T-cell (primary cell): ENCODE measurements at regions of chr14 and their contacts with region 1.

Region 1: DNA sequence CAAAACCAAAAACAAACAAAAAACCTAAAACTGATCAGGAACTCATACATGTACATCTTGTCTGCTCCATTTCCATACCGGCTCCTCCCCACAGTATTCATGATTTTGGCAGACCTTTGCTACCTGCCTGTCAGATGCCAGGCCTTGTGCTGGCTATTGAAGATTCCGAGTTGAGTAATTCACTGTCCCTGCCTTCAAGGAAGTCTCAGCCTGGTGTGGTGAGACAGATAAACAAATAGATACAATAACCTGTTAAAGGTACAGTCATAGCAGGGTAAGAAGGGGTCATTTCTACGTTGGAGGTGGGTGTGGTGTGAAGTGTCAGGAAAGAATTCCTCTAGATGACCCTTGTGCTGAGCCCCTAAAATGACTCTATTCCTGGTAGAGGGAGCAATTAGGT is 42.8 kb downstream of the SUSD6 start:
- DNase-seq: no peak
- ATAC-seq: no peak
- H3K4me3 ChIP-seq: no peak overlapping the region
- H3K4me3 Mint-ChIP-seq: no peak overlapping the region
- H3K27ac ChIP-seq: no peak overlapping the region
- H3K27ac Mint-ChIP-seq: peak overlapping the region; percentile 63 to 70
- H3K4me1 ChIP-seq: peaks cover 15 to 44% of the 10 kb centered on the region in 2 experiments
- H3K4me1 Mint-ChIP-seq: peaks cover 85 to 93% (median 89%) of the 10 kb centered on the region in 3 donors
- H3K27me3 ChIP-seq: no peaks in the 10 kb centered on the region
- H3K27me3 Mint-ChIP-seq: no peaks in the 10 kb centered on the region

Region 2: GRCh38 chr14:69527635-69528034 is 126.5 kb before region 1 on chr14:
- CTCF ChIA-PET with region 1: no interaction called
- POLR2A ChIA-PET with region 1: no interaction called
- DNase-seq: no peak
- ATAC-seq: no peak
- H3K4me3 ChIP-seq: no peak overlapping the region
- H3K4me3 Mint-ChIP-seq: no peak overlapping the region
- H3K27ac ChIP-seq: no peak overlapping the region
- H3K27ac Mint-ChIP-seq: no peak overlapping the region
- H3K4me1 ChIP-seq: no peaks in the 10 kb centered on the region
- H3K4me1 Mint-ChIP-seq: no peaks in the 10 kb centered on the region
- H3K27me3 ChIP-seq: peaks cover 0 to 18% of the 10 kb centered on the region in 2 experiments
- H3K27me3 Mint-ChIP-seq: peaks cover 3 to 11% of the 10 kb centered on the region in 2 donors

Region 3: GRCh38 chr14:69643443-69644164 is 10.5 kb before region 1 on chr14:
- CTCF ChIA-PET with region 1: no interaction called
- POLR2A ChIA-PET with region 1: no interaction called
- DNase-seq: peak in 10 of 35 experiments; percentile 10 to 58 (median 27)
- ATAC-seq: peak; percentile 59 to 99 (median 96)
- H3K4me3 ChIP-seq: no peak overlapping the region
- H3K4me3 Mint-ChIP-seq: peak overlapping the region in 1 of 3 donors; percentile 7
- H3K27ac ChIP-seq: no peak overlapping the region
- H3K27ac Mint-ChIP-seq: peak overlapping the region; percentile 60 to 76
- H3K4me1 ChIP-seq: peaks cover 8 to 34% of the 10 kb centered on the region in 2 experiments
- H3K4me1 Mint-ChIP-seq: peaks cover 75 to 94% (median 87%) of the 10 kb centered on the region in 3 donors
- H3K27me3 ChIP-seq: no peaks in the 10 kb centered on the region
- H3K27me3 Mint-ChIP-seq: no peaks in the 10 kb centered on the region

Region 4: GRCh38 chr14:69673578-69674305 is 19.6 kb after region 1 on chr14:
- CTCF ChIA-PET with region 1: interaction called in 1 of 2 experiments, 12 read pairs
- POLR2A ChIA-PET with region 1: no interaction called
- DNase-seq: peak in 1 of 35 experiments; percentile 11
- ATAC-seq: peak; percentile 33 to 47 (median 40)
- H3K4me3 ChIP-seq: no peak overlapping the region
- H3K4me3 Mint-ChIP-seq: peak overlapping the region; percentile 15 to 71 (median 48)
- H3K27ac ChIP-seq: peak overlapping the region; percentile 3
- H3K27ac Mint-ChIP-seq: peak overlapping the region; percentile 90 to 91
- H3K4me1 ChIP-seq: peaks cover 39 to 59% of the 10 kb centered on the region in 2 experiments
- H3K4me1 Mint-ChIP-seq: peaks cover 79 to 83% (median 83%) of the 10 kb centered on the region in 3 donors
- H3K27me3 ChIP-seq: no peaks in the 10 kb centered on the region
- H3K27me3 Mint-ChIP-seq: no peaks in the 10 kb centered on the region